Activated CD8-positive, alpha-beta T cell treated with anti-CD3 and anti-CD28 coated beads for 36 hours (primary cell): ENCODE measurements at regions of chr2 and their contacts with region 1.

Region 1: GRCh38 chr2:230864598-230865306 is at the start of gene ITM2C:
- DNase-seq: peak; percentile 82
- ATAC-seq: peak; percentile 85
- H3K4me3 Mint-ChIP-seq: peak within 1 kb of the TSS; percentile 73
- H3K27ac Mint-ChIP-seq: peak within 1 kb of the TSS; percentile 55
- H3K4me1 Mint-ChIP-seq: peaks cover 50% of the 10 kb centered on the region
- H3K27me3 Mint-ChIP-seq: peaks cover 2% of the 10 kb centered on the region
- CTCF ChIP-seq: peak; percentile 13
- total RNA-seq, gene ITM2C: 43.2 to 43.4 TPM

Region 2: DNA sequence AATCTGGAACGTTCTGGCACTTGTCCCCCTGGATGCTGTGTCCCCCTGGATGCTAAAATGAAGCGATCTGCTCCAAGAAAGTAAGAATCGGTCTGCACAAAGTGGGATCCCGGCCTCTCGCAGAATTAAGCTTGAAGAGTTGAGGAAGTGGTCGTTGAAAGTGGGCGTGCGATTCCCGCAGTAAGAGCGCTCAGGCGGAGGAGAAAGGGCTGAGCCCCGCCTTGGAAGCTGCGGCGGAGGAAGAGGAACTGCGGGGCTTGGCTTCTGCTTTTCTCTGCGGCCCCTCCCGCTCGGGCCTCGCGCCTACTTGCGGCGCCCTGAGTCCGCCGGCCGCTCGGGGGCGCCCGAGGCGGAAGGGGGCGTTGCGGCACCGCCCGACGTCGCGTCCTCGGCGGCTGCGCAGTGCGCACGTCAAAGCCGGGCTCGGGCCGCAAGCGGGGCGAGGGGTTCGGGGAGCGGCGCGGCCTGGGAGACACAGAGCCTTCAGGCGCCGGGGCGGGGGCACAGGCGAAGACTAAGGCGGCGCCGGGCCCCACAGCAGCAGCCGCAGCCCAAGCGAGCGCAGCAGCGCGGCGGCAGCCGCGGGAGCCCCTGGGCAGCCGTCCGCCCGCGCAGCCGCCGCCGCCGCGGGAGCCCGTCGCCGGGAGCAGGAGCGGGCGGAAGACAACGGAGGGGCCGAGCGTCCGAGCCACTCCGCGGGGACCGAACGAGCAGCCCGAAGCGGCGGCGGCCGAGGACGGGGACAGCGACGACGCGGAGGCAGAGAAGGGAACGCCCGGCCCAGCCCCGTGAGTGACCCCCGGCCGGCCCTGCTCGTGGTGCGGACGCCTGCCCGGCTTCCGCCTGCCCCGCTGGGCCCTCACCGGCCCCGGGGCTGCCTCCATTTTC is 152.1 kb before region 1 on chr2 and contains the start of gene CAB39:
- CTCF ChIA-PET with region 1: no interaction called
- POLR2A ChIA-PET with region 1: no interaction called
- intact Hi-C with region 1: no loop called
- DNase-seq: peak; percentile 84
- ATAC-seq: peak; percentile 89
- H3K4me3 Mint-ChIP-seq: peak within 1 kb of the TSS; percentile 88
- H3K27ac Mint-ChIP-seq: peak within 1 kb of the TSS; percentile 92
- H3K4me1 Mint-ChIP-seq: peaks cover 35% of the 10 kb centered on the region
- H3K27me3 Mint-ChIP-seq: no peaks in the 10 kb centered on the region
- CTCF ChIP-seq: peak; percentile 80
- total RNA-seq, gene CAB39: 119 to 120 TPM

Region 3: GRCh38 chr2:230877732-230878598 is 13.2 kb after region 1 on chr2:
- CTCF ChIA-PET with region 1: interaction called, 15 read pairs
- POLR2A ChIA-PET with region 1: interaction called, 8 read pairs
- intact Hi-C with region 1: no loop called
- DNase-seq: peak; percentile 88
- ATAC-seq: peak; percentile 90
- H3K4me3 Mint-ChIP-seq: peak overlapping the region; percentile 33
- H3K27ac Mint-ChIP-seq: peak overlapping the region; percentile 92
- H3K4me1 Mint-ChIP-seq: peaks cover 52% of the 10 kb centered on the region
- H3K27me3 Mint-ChIP-seq: no peaks in the 10 kb centered on the region
- CTCF ChIP-seq: no peak

Region 4: GRCh38 chr2:231104115-231104713 is 239.5 kb after region 1 on chr2:
- CTCF ChIA-PET with region 1: no interaction called
- POLR2A ChIA-PET with region 1: no interaction called
- intact Hi-C with region 1: no loop called
- DNase-seq: peak; percentile 76
- ATAC-seq: peak; percentile 92
- H3K4me3 Mint-ChIP-seq: no peak overlapping the region
- H3K27ac Mint-ChIP-seq: no peak overlapping the region
- H3K4me1 Mint-ChIP-seq: peaks cover 11% of the 10 kb centered on the region
- H3K27me3 Mint-ChIP-seq: no peaks in the 10 kb centered on the region
- CTCF ChIP-seq: peak; percentile 80